Ovary (tissue), 10 donors: ENCODE measurements at regions of chr3 and their contacts with region 1.

Region 1: DNA sequence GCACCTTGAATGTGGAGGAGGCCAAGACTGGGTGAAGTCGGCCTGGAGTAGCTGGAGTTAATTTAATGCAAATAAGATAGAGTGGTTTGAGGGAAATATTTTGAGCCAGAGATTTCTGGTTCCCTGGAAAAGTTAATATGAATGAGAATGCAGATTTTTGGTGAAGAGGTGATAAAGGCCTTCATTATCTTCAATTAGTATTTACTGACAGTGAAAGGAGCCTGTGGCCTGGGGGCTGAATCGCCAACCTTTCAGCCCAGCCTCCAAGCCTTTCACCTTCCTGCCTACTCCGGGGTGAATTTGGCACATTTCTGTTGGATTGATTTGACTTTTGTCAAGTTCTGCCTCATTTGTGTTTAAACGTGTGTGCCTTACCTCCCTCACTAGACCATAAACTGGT is 147.8 kb downstream of the SOX2 start:
- DNase-seq: no peak
- H3K4me3 ChIP-seq: no peak overlapping the region
- H3K27ac ChIP-seq: no peak overlapping the region
- H3K4me1 ChIP-seq: no peaks in the 10 kb centered on the region
- H3K27me3 ChIP-seq: no peaks in the 10 kb centered on the region
- CTCF ChIP-seq: no peak
- EP300 ChIP-seq: no peak
- POLR2A ChIP-seq: no peak

Region 2: DNA sequence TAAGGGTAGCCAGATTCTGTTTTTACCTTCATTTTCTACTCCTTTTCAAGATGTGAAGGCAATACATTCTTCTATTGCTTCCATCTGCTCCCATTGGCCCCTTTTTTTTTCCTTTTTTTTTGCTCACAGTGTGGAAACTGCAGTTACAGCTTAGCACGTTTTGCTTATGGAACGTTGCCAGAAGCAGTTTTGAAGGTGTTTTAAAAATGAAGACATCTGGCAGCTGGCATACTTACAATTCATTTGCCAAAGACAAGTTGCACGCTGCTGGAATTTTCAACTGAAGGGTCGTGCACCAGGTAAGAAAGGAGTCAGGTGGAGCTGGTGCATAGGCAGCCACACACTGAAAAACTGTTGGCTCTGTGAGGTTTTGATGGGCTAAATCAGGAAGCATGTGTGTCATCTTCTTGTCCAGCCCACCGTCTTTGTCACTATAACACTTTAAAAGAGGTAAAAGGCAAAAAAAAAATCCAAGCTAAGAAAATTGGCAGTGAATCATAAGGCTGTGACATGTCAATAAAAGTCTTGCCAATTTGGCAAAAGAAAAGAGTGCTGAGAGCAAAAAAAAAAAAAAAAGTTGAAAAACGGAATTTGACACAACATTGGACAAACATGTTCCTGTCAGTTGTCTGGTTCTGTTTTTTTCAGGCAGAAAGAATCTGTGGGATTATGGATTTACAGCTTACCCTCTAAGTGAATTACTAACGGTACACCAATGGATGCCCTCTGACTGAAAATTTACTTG is 373.2 kb before region 1 on chr3:
- intact Hi-C with region 1: no loop called
- DNase-seq: no peak
- H3K4me3 ChIP-seq: no peak overlapping the region
- H3K27ac ChIP-seq: no peak overlapping the region
- H3K4me1 ChIP-seq: no peaks in the 10 kb centered on the region
- H3K27me3 ChIP-seq: no peaks in the 10 kb centered on the region
- CTCF ChIP-seq: no peak
- EP300 ChIP-seq: no peak
- POLR2A ChIP-seq: no peak

Region 3: GRCh38 chr3:181823716-181824115 is 35.8 kb before region 1 on chr3:
- intact Hi-C with region 1: loop called in 1 of 4 experiments (anchors 1 kb)
- DNase-seq: no peak
- H3K4me3 ChIP-seq: no peak overlapping the region
- H3K27ac ChIP-seq: no peak overlapping the region
- H3K4me1 ChIP-seq: no peaks in the 10 kb centered on the region
- H3K27me3 ChIP-seq: no peaks in the 10 kb centered on the region
- CTCF ChIP-seq: no peak
- EP300 ChIP-seq: no peak
- POLR2A ChIP-seq: no peak